Calu3 (cell line): ENCODE measurements at regions of chr11 and their contacts with region 1.

Region 1: GRCh38 chr11:32706949-32707736 is 87.3 kb downstream of the CCDC73 start:
- DNase-seq: no peak
- H3K4me3 Mint-ChIP-seq: peak overlapping the region; percentile 40
- H3K27ac Mint-ChIP-seq: peak overlapping the region; percentile 75
- H3K4me1 Mint-ChIP-seq: peaks cover 37% of the 10 kb centered on the region
- H3K27me3 Mint-ChIP-seq: no peaks in the 10 kb centered on the region
- CTCF ChIP-seq: no peak

Region 2: GRCh38 chr11:32326522-32326921 is 380.6 kb before region 1 on chr11:
- CTCF ChIA-PET with region 1: no interaction called
- intact Hi-C with region 1: loop called (anchors 10 kb)
- DNase-seq: no peak
- H3K4me3 Mint-ChIP-seq: no peak overlapping the region
- H3K27ac Mint-ChIP-seq: no peak overlapping the region
- H3K4me1 Mint-ChIP-seq: no peaks in the 10 kb centered on the region
- H3K27me3 Mint-ChIP-seq: peaks cover 18% of the 10 kb centered on the region
- CTCF ChIP-seq: no peak

Region 3: DNA sequence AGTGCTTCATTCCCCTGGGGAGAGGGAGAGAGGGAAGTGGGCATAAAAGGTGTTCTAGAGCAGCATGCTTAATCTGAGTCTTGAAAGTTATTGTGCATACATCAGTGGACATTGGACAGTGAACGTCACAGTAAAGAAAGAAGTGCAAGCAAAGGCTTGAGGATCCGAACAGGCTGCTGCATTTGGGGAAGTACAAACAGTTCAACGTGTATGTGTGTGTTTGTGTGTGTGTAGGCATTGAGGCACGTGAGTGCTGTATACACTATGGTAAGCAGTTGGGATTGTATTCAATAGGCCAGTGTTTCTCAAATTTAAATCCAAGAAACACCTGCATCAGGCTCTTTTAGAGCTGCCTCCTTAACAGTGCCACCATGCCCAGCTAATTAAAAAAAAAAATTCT is 133.9 kb before region 1 on chr11:
- CTCF ChIA-PET with region 1: no interaction called
- intact Hi-C with region 1: no loop called
- DNase-seq: no peak
- H3K4me3 Mint-ChIP-seq: no peak overlapping the region
- H3K27ac Mint-ChIP-seq: no peak overlapping the region
- H3K4me1 Mint-ChIP-seq: no peaks in the 10 kb centered on the region
- H3K27me3 Mint-ChIP-seq: peaks cover 42% of the 10 kb centered on the region
- CTCF ChIP-seq: no peak

Region 4: GRCh38 chr11:32586572-32587190 is 120.5 kb before region 1 on chr11:
- CTCF ChIA-PET with region 1: no interaction called
- intact Hi-C with region 1: loop called (anchors 5 kb)
- DNase-seq: peak; percentile 24
- H3K4me3 Mint-ChIP-seq: peak overlapping the region; percentile 31
- H3K27ac Mint-ChIP-seq: no peak overlapping the region
- H3K4me1 Mint-ChIP-seq: no peaks in the 10 kb centered on the region
- H3K27me3 Mint-ChIP-seq: no peaks in the 10 kb centered on the region
- CTCF ChIP-seq: no peak

Region 5: DNA sequence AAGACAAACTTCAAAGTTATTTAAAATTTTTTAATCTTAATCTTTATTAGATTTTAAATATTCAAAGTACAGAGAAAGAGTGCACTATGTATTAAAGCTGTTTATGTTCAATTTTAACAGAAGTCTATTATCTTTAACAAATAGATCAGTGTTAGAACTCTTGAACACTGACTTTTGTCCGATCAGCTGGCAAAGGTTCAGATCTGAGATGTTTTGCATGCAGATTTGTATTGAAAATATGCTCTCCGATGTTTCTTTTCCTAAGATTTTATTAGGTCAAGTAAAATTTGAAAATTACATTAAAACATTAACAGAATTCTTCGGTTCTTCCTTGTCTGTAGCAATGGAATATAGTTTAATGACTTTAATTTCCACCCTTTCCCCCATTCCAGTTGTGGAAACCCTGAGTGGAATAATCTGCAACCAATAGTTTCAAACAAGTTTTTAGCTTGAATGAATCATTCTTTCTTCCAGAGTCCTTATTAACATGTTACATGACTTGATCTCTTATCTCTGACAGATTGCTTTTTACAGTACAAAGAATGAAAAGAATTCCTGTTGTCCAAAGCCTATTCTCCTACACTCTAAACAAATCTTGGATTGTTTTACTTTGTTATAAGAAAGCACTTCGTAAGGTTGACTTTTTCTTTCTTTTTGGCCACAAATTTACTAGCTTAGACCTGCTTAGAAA is 320.8 kb after region 1 on chr11:
- CTCF ChIA-PET with region 1: no interaction called
- intact Hi-C with region 1: no loop called
- DNase-seq: no peak
- H3K4me3 Mint-ChIP-seq: no peak overlapping the region
- H3K27ac Mint-ChIP-seq: no peak overlapping the region
- H3K4me1 Mint-ChIP-seq: no peaks in the 10 kb centered on the region
- H3K27me3 Mint-ChIP-seq: no peaks in the 10 kb centered on the region
- CTCF ChIP-seq: no peak